Natural killer cell (primary cell): ENCODE measurements at regions of chr6 and their contacts with region 1.

Region 1: DNA sequence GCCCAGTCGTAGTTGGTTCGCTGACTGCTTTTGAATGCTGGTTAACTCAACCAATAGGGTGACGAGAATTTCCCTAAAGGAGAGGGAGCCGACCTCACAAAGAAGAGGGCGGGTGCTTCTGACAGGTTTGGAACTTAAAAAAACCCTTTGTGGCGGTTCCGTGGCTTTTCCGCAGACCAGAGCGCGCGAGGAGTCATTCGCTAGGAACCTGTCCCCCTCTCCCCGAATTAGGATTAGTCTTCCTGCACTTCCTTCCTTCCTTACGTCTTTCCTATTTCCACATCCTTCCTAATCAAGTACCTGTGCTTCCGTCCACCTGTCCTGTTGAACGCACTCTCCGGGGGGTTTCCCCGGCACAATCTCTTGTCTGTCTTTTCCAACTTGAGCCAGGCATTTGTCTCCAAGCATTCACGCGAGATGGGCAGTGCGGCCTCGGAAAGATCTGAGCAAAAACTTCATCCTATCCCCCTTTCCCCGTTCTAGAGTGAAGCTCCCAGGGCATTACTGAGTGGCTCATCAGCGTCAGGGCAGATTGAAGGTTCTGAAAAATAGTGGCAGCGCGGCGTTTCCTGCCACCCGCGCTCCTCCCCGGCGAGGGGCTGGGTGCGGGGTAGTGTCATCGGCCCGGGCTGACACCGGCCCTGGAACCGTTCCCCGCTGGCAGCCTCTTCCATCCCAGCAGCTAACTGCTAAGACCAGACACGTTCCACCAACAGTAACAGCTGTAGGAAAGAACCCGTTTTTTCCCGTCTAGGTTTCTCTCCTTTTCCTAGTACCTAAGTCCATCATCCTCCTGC is 1.5 kb upstream of the STXBP5 start:
- DNase-seq: peak; percentile 67 to 95
- ATAC-seq: peak; percentile 82 to 92 (median 87)
- H3K4me3 ChIP-seq: peak overlapping the region; percentile 87
- H3K4me3 Mint-ChIP-seq: peak overlapping the region; percentile 95
- H3K27ac ChIP-seq: peak overlapping the region; percentile 89
- H3K27ac Mint-ChIP-seq: peak overlapping the region; percentile 92
- H3K4me1 ChIP-seq: peaks cover 11% of the 10 kb centered on the region
- H3K4me1 Mint-ChIP-seq: peaks cover 36 to 41% of the 10 kb centered on the region in 2 donors
- H3K27me3 ChIP-seq: no peaks in the 10 kb centered on the region
- H3K27me3 Mint-ChIP-seq: peaks cover 0 to 3% of the 10 kb centered on the region in 2 donors
- CTCF ChIP-seq: no peak

Region 2: DNA sequence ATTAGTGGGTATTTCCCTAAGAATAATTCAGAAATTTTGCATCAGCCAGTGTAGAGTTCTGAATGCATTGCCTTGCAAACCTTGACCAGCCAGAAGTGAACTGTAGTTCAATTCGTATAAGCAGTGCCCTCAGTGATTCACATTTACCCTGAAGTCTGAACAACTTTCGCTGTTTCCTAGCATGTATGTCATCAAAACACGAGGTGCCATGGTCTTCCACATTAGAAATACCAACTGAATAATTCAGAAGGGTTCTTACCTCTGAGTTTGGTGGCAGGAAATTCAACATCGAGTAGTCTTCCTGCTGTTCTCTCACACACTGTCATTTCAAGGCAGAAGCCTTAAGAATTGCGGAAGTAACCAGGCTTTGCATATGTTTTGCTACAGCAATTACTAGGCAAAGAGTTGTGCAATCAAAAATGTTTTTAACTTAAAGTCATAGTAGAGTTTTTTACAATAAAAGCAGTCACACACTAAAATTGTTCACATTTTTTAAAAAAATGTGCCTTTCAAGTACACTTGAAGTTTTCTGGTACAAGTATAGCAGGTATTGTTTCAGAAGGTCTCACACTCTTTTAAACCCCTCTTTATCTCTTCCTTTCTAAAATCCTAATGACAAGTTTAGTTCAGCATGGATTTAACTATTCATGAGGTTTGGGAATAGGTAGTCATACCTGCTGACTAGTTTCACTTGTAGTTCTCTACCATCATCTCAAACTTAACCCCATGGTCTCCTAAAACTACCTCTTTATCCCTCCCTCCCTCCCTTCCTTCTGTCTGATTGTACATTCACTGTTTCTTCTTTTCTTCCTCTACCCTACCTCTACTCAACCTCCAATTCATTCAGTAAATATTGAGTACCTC is 119.8 kb after region 1 on chr6:
- intact Hi-C with region 1: loop called (anchors 10 kb)
- DNase-seq: peak in 1 of 2 donors; percentile 58
- ATAC-seq: peak; percentile 90 to 93 (median 92)
- H3K4me3 ChIP-seq: peak overlapping the region; percentile 23
- H3K4me3 Mint-ChIP-seq: peak overlapping the region; percentile 70
- H3K27ac ChIP-seq: peak overlapping the region; percentile 80
- H3K27ac Mint-ChIP-seq: peak overlapping the region; percentile 84
- H3K4me1 ChIP-seq: peaks cover 11% of the 10 kb centered on the region
- H3K4me1 Mint-ChIP-seq: peaks cover 25 to 36% of the 10 kb centered on the region in 2 donors
- H3K27me3 ChIP-seq: no peaks in the 10 kb centered on the region
- H3K27me3 Mint-ChIP-seq: no peaks in the 10 kb centered on the region
- CTCF ChIP-seq: no peak